ENCODE measurements at regions of chr14 and their contacts with region 1.

Region 1: DNA sequence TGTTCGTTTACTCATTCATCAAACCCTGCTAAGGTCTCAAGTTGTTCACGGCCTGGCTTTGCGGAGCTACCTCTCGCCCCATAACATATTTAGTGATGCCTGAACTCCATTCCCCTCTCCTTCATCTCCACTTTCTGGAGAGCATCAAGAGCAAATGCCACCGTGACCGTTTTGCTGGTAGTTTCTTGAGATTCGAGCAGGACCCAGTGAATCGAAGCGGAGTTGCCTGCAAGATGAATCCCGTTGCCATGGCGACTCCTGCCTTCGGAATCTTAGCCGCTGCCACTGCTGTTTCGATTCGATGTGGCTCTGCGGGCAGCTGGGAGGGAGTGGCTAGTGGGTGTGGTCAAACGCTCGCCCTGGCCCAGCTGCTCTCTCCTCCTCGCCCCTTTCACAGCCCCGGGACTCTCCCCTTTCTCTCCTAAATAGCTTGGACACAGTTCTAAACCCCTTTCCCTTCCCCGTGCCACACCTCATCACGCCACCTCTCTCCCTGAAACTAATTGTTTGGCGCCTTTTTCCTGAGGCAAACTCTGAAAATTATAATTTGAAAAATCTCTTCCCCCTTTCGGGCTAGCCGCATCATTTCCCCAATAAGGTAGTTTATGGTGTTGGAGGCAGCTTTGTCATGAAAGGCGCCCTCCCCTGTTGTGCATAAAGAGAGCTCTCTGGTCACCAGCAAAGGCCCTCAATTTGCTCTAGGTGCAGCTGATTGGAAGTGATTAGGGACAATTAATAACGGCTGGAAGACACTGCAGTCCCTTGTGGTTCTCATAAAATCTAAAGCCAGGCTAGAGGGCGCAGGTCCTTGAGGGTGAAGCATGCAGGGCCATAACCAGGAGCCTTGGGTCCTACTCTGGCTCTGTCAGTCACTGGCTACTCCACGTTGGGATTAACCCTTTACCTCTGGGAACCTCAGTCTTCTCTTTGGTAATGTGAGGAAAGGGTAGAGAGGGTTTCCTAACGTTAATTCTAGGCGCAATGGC is 1.6 kb downstream of the DAAM1 start:
- DNase-seq: peak; percentile 75
- ATAC-seq: peak; percentile 36
- H3K4me3 ChIP-seq: peak overlapping the region; percentile 84 to 87 (median 86)
- H3K27ac ChIP-seq: peak overlapping the region; percentile 91
- H3K4me1 ChIP-seq: peaks cover 53% of the 10 kb centered on the region
- H3K27me3 ChIP-seq: peaks cover 0 to 1% of the 10 kb centered on the region in 2 experiments; a peak in 2 of 5 replicates
- CTCF ChIP-seq: peak; percentile 44
- EP300 ChIP-seq: no peak
- POLR2A ChIP-seq: peak in 1 of 2 experiments; percentile 36; a peak in 1 of 4 replicates
- RAD21 ChIP-seq: no peak

Region 2: GRCh38 chr14:58549105-58549755 is 640.8 kb before region 1 on chr14:
- CTCF ChIA-PET with region 1: no interaction called
- POLR2A ChIA-PET with region 1: no interaction called
- in situ Hi-C with region 1: no loop called
- intact Hi-C with region 1: no loop called
- DNase-seq: no peak
- ATAC-seq: no peak
- H3K4me3 ChIP-seq: no peak overlapping the region
- H3K27ac ChIP-seq: no peak overlapping the region
- H3K4me1 ChIP-seq: no peaks in the 10 kb centered on the region
- H3K27me3 ChIP-seq: no peaks in the 10 kb centered on the region
- CTCF ChIP-seq: no peak
- EP300 ChIP-seq: no peak
- POLR2A ChIP-seq: no peak
- RAD21 ChIP-seq: no peak

Region 3: GRCh38 chr14:59215325-59216181 is 25.5 kb after region 1 on chr14:
- CTCF ChIA-PET with region 1: no interaction called
- POLR2A ChIA-PET with region 1: interaction called, 11 read pairs
- in situ Hi-C with region 1: no loop called
- intact Hi-C with region 1: loop called (anchors 1 kb)
- DNase-seq: peak; percentile 78
- ATAC-seq: peak; percentile 97
- H3K4me3 ChIP-seq: peak overlapping the region; percentile 19 to 63 (median 38); a peak in 5 of 6 replicates
- H3K27ac ChIP-seq: peak overlapping the region; percentile 62
- H3K4me1 ChIP-seq: peaks cover 62% of the 10 kb centered on the region
- H3K27me3 ChIP-seq: no peaks in the 10 kb centered on the region
- CTCF ChIP-seq: no peak; the same call in 1 of the 2 replicates
- EP300 ChIP-seq: no peak
- POLR2A ChIP-seq: no peak
- RAD21 ChIP-seq: peak; percentile 18; the same call in 1 of the 2 replicates

Region 4: DNA sequence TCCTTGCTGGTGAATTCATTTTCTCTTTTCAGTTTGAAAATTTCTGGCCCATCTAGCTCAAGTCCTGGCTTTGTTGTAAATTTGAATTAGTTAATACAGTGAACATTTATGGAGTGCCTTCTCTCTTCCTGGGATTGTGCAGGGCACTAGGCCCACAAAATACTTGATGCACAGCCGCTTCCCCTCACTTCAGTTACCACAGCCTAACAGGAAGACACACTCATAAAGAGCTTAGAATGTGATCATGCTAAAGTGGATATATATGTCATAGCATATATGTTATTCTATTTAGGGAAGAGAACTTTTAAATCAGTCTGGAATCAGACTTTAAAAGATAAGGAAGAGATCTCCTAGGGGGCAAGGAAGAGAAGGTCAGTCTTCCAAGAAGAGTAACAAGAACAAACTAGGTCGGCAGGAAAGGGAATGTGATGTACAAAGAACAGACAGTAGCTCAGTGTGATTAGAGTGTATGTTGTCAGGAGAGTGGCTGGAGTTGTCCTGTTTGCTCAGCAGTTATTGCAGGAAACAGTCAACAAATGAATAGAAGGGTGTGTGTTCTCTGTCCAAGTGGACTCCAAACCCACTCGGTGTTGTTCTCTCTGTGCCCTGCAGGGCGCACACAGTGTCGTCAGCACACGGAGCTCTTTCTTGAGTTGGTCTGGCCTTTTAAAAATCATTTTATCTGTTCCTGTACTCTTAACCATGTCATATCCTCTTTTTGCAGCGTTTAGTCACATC is 72.8 kb after region 1 on chr14:
- CTCF ChIA-PET with region 1: no interaction called
- POLR2A ChIA-PET with region 1: interaction called, 9 read pairs
- in situ Hi-C with region 1: no loop called
- intact Hi-C with region 1: loop called (anchors 1 kb)
- DNase-seq: peak; percentile 95
- ATAC-seq: peak; percentile 100
- H3K4me3 ChIP-seq: peak overlapping the region in 2 of 3 experiments; percentile 28 to 38; a peak in 2 of 6 replicates
- H3K27ac ChIP-seq: peak overlapping the region; percentile 84
- H3K4me1 ChIP-seq: peaks cover 47% of the 10 kb centered on the region
- H3K27me3 ChIP-seq: no peaks in the 10 kb centered on the region
- CTCF ChIP-seq: peak; percentile 68
- EP300 ChIP-seq: peak in 1 of 2 experiments; percentile 83; a peak in 2 of 4 replicates
- POLR2A ChIP-seq: no peak
- RAD21 ChIP-seq: peak; percentile 60

Region 5: GRCh38 chr14:59438195-59438647 is 248.1 kb after region 1 on chr14:
- CTCF ChIA-PET with region 1: no interaction called
- POLR2A ChIA-PET with region 1: no interaction called
- in situ Hi-C with region 1: no loop called
- intact Hi-C with region 1: loop called (anchors 5 kb)
- DNase-seq: no peak
- ATAC-seq: no peak
- H3K4me3 ChIP-seq: no peak overlapping the region
- H3K27ac ChIP-seq: no peak overlapping the region
- H3K4me1 ChIP-seq: no peaks in the 10 kb centered on the region
- H3K27me3 ChIP-seq: no peaks in the 10 kb centered on the region
- CTCF ChIP-seq: no peak
- EP300 ChIP-seq: no peak
- POLR2A ChIP-seq: no peak
- RAD21 ChIP-seq: no peak